HEK293T (cell line): ENCODE measurements at regions of chr7 and their contacts with region 1.

Region 1: GRCh38 chr7:100586266-100587025 is at the start of gene FBXO24:
- DNase-seq: peak; percentile 98

Region 2: GRCh38 chr7:100418930-100419659 is 167.4 kb before region 1 on chr7:
- CTCF ChIA-PET with region 1: no interaction called
- POLR2A ChIA-PET with region 1: no interaction called
- DNase-seq: no peak

Region 3: GRCh38 chr7:100570954-100571828 is 15.3 kb before region 1 on chr7:
- CTCF ChIA-PET with region 1: interaction called, 4 read pairs
- POLR2A ChIA-PET with region 1: interaction called, 10 read pairs
- DNase-seq: no peak

Region 4: GRCh38 chr7:100604028-100604975 is 17.9 kb after region 1 on chr7:
- CTCF ChIA-PET with region 1: interaction called, 4 read pairs
- POLR2A ChIA-PET with region 1: interaction called, 40 read pairs
- DNase-seq: peak; percentile 81

Region 5: GRCh38 chr7:100611974-100612729 is 25.7 kb after region 1 on chr7 and contains the start of gene MOSPD3:
- CTCF ChIA-PET with region 1: interaction called, 4 read pairs
- POLR2A ChIA-PET with region 1: interaction called, 15 read pairs
- DNase-seq: peak; percentile 97

Region 6: GRCh38 chr7:100623951-100624824 is 37.7 kb after region 1 on chr7:
- CTCF ChIA-PET with region 1: no interaction called
- POLR2A ChIA-PET with region 1: no interaction called
- DNase-seq: no peak